ENCODE measurements at regions of chr3 and their contacts with region 1.

Region 1: DNA sequence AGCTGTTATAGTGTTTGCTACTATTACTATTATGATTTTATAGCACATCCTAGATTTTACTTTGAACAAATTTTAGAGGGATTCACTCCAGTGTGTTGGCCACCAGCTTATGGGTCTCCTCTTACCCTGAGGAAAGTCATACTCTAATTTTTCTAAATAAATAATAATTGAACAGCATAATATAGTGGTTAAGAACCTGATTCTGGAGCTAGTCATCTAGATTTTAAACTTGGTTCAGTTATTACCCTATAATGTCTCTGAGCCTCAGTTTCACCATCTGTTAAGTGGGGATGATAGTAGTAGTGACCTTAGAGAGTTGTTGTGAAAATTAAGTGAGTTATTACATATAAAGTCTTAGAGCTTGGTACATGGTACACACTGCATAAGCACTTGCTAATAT is 30.7 kb upstream of the TOPAZ1 start:
- DNase-seq: no peak
- H3K4me3 ChIP-seq: no peak overlapping the region
- H3K27ac ChIP-seq: no peak overlapping the region
- H3K4me1 ChIP-seq: no peaks in the 10 kb centered on the region
- H3K27me3 ChIP-seq: no peaks in the 10 kb centered on the region
- CTCF ChIP-seq: no peak
- EP300 ChIP-seq: no peak
- RAD21 ChIP-seq: no peak

Region 2: DNA sequence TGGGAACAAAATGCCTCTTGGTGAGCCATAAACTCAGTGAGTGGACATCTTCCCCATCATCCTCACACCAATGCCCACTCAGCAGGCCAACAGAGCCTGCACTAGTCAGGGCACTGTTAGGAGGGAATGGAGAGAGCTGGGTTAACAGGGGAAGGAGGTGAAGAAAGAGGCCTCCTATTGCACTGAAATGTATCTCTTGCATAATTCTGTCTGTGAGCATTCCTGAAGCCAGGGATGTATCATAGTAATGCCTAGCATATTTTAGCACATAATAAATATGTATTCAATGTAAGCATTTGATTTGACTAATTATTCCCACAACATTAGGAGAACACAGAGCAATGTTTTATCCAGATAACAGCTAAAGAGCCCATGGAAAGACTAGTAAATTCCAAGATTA is 670.3 kb before region 1 on chr3:
- CTCF ChIA-PET with region 1: interaction called, 10 read pairs
- POLR2A ChIA-PET with region 1: no interaction called
- DNase-seq: no peak
- H3K4me3 ChIP-seq: no peak overlapping the region
- H3K27ac ChIP-seq: no peak overlapping the region
- H3K4me1 ChIP-seq: peaks cover 0 to 5% of the 10 kb centered on the region in 2 experiments; a peak in 1 of 4 replicates
- H3K27me3 ChIP-seq: no peaks in the 10 kb centered on the region
- CTCF ChIP-seq: no peak
- EP300 ChIP-seq: no peak
- RAD21 ChIP-seq: no peak

Region 3: GRCh38 chr3:44186111-44186672 is 24.8 kb before region 1 on chr3:
- CTCF ChIA-PET with region 1: no interaction called
- POLR2A ChIA-PET with region 1: no interaction called
- DNase-seq: no peak
- H3K4me3 ChIP-seq: no peak overlapping the region
- H3K27ac ChIP-seq: no peak overlapping the region
- H3K4me1 ChIP-seq: peaks cover 0 to 5% of the 10 kb centered on the region in 2 experiments; a peak in 1 of 4 replicates
- H3K27me3 ChIP-seq: no peaks in the 10 kb centered on the region; the same call in 1 of the 2 replicates
- CTCF ChIP-seq: no peak
- EP300 ChIP-seq: no peak
- RAD21 ChIP-seq: no peak

Measured in SK-N-SH (cell line).